Ascending aorta (tissue), 2 donors: ENCODE measurements at regions of chr9 and their contacts with region 1.

Region 1: DNA sequence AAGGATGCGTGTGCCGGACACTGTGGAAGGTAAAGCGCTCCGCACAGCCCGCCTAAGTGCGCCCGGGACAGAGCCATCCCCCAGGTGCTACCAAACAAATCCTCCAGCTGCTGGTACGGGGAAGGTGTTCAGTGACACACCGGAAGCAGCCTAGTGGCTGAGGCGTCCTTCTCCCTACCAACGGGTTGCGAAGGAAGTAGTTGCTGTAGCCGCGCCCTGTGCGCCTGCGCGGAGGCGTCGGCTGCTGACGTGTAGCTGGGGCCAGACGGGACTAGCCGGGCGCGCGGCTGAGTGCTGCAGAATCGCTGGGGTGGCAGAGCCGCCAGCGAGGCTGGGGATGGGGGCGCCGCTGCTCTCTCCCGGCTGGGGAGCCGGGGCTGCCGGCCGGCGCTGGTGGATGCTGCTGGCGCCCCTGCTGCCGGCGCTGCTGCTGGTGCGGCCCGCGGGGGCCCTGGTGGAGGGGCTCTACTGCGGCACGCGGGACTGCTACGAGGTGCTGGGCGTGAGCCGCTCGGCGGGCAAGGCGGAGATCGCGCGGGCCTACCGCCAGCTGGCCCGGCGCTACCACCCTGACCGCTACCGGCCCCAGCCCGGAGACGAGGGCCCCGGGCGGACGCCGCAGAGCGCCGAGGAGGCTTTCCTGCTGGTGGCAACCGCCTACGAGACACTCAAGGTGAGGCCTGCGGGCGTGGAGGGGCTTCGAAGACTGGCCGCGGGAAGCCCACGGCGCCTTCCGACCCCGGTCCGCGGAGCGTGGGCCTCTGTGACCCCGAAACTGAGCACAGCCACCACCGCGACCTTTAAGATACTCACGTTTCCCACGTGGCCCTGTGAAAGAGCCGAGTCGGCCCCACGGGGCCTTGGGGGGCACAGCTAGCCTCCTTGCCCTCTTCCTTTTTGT is at the start of gene DNAJC25:
- DNase-seq: peak; percentile 91 to 98
- H3K4me3 ChIP-seq: peak within 1 kb of the TSS; percentile 92 to 99
- H3K27ac ChIP-seq: peak within 1 kb of the TSS; percentile 84 to 92
- H3K4me1 ChIP-seq: peaks cover 0 to 13% of the 10 kb centered on the region in 2 donors
- H3K27me3 ChIP-seq: no peaks in the 10 kb centered on the region
- CTCF ChIP-seq: no peak
- total RNA-seq, gene DNAJC25: 2.2 TPM

Region 2: GRCh38 chr9:110763568-110763967 is 867.8 kb before region 1 on chr9:
- intact Hi-C with region 1: no loop called
- DNase-seq: no peak
- H3K4me3 ChIP-seq: no peak overlapping the region
- H3K27ac ChIP-seq: no peak overlapping the region
- H3K4me1 ChIP-seq: peaks cover 0 to 5% of the 10 kb centered on the region in 2 donors
- H3K27me3 ChIP-seq: no peaks in the 10 kb centered on the region
- CTCF ChIP-seq: no peak

Region 3: DNA sequence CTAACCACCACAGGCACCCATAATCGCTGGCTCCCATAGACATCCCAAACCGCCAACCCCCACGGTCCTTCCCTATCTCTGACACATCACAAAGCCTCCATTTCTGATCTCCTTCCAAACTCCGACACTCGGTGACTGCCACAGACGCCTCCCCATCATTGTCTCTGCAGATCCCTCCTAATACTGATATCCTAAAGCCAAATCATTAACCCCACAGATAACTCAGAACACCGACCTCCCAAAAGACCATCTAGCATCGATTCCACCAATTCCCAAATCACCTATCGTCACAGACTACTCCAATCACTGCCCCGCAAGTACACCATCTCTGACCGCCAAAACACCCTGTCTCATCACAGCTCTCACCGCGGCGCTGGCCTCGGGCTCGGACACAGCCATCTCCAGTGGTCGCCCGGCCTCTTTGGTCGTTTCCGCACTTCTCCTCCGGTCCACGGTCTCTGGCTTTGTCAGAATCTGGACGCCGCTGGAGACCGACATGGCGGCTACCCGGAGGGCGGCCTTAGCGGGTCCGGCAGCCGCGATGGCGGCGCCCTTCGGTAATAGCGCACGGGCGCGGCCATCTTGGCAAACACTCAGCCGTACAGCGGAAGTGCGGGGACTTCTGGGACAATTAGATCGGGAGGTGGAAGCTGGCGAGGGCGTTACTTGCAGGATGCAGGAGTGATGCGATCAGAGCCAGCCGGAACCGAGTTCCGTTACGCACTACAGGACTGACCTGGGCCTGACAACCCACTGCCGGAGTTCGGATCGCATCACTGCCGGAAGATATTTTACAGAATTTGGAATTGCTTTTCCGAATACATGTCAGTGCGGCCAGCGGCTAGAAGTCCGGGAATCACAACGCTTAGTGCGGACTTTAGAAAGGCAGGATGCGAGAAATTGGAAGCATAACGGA is 1425.1 kb after region 1 on chr9 and contains the start of gene ZFP37:
- intact Hi-C with region 1: loop called (anchors 10 kb)
- DNase-seq: peak; percentile 77 to 97
- H3K4me3 ChIP-seq: peak within 1 kb of the TSS; percentile 69 to 77
- H3K27ac ChIP-seq: peak within 1 kb of the TSS; percentile 62 to 84
- H3K4me1 ChIP-seq: no peaks in the 10 kb centered on the region
- H3K27me3 ChIP-seq: peaks cover 2% of the 10 kb centered on the region
- CTCF ChIP-seq: no peak
- total RNA-seq, gene ZFP37: 3.3 TPM